Ovary (tissue), 10 donors: ENCODE measurements at regions of chr11 and their contacts with region 1.

Region 1: DNA sequence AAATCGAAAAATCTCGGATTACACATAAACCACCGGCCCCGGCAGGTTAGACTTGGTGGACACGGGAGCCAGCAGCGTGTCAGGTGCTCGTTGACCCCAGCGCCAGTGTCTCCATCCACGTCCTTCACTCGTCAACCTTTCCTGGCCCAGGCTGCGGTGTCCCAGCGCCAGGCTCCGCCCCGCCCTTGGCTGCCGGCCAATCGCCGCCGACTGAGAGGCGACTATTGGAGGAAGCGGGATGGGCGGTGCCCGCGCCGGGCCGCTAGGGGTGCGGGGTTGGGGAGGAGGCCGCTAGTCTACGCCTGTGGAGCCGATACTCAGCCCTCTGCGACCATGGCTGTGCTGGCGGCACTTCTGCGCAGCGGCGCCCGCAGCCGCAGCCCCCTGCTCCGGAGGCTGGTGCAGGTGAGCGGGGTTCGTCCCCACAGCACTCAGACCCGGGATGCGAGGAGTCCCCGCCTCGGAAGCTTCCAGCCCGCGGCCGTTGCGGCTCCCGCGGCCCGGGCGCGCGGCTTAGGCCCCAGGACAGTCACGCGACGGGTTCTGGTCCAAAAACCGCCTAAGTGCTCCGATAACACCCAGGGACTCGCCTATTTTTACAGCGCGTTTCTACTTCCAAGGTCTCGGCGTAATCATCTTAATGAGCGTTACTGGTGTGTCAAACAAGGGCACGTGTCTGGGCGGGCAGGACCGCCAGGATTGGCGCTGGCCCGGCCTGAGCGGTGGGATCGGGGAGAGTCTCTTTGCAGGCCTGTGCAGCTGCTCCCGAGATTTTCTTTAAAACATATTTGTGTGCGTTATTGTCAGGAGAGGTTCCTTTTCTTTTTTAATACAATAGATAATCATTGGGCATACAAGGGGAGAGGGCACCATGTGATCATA is at the start of gene ACAT1:
- DNase-seq: peak; percentile 97 to 98 (median 98)
- H3K4me3 ChIP-seq: peak within 1 kb of the TSS; percentile 85
- H3K27ac ChIP-seq: peak within 1 kb of the TSS; percentile 69 to 94
- H3K4me1 ChIP-seq: peaks cover 8% of the 10 kb centered on the region
- H3K27me3 ChIP-seq: no peaks in the 10 kb centered on the region
- CTCF ChIP-seq: peak; percentile 38 to 80 (median 75)
- EP300 ChIP-seq: no peak
- POLR2A ChIP-seq: peak; percentile 84
- total RNA-seq, gene ACAT1: 50.0 to 84.4 (median 74.6) TPM

Region 2: DNA sequence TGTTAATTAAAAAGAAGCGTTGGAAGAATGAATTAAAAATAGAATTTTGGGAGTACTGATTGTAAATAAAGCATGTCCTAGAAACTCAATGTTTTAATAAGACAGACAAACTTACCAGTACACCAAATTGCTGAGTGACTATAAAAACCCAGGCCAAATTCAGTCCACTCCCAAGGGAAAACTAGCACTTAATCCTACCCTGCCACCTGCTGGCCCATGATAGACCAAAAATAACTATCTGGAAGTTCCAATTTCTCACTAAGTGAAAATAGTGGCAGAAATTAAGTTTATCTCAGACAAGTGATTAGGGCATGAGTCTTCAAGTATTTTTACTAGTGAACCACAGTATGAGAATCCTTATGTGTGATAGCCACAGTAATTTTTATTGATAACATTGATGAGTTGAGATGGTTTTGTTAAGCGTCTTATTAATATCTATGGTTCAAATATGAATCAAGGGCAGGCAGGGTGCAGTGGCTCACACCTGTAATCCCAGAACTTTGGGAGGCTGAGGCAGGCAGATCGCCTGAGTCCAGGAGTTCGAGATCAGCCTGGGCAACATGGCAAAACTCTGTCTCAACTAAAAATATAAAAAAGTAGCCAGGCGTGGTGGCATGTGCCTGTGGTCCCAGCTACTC is 533.6 kb after region 1 on chr11:
- intact Hi-C with region 1: loop called in 2 of 4 experiments (anchors 5 to 10 kb)
- DNase-seq: peak in 2 of 5 donors; percentile 24 to 40
- H3K4me3 ChIP-seq: no peak overlapping the region
- H3K27ac ChIP-seq: no peak overlapping the region
- H3K4me1 ChIP-seq: no peaks in the 10 kb centered on the region
- H3K27me3 ChIP-seq: no peaks in the 10 kb centered on the region
- CTCF ChIP-seq: no peak
- EP300 ChIP-seq: no peak
- POLR2A ChIP-seq: no peak

Region 3: GRCh38 chr11:108664730-108665525 is 543.4 kb after region 1 on chr11 and contains the start of gene DDX10:
- intact Hi-C with region 1: loop called in 1 of 4 experiments (anchors 10 kb)
- DNase-seq: peak; percentile 98 to 99 (median 99)
- H3K4me3 ChIP-seq: peak within 1 kb of the TSS; percentile 54
- H3K27ac ChIP-seq: no peak within 1 kb of the TSS
- H3K4me1 ChIP-seq: peaks cover 16% of the 10 kb centered on the region
- H3K27me3 ChIP-seq: no peaks in the 10 kb centered on the region
- CTCF ChIP-seq: peak in 1 of 3 donors; percentile 40
- EP300 ChIP-seq: no peak
- POLR2A ChIP-seq: no peak
- total RNA-seq, gene DDX10: 13.1 to 34.3 (median 26.4) TPM